ENCODE measurements at regions of chr2 and their contacts with region 1.

Region 1: GRCh38 chr2:105454801-105455485 is 56.1 kb upstream of the FHL2 start:
- DNase-seq: peak; percentile 94
- ATAC-seq: peak; percentile 70
- H3K4me3 ChIP-seq: peak overlapping the region; percentile 28; the same call in 1 of the 2 replicates
- H3K27ac ChIP-seq: peak overlapping the region; percentile 96
- H3K4me1 ChIP-seq: peaks cover 28% of the 10 kb centered on the region
- H3K27me3 ChIP-seq: no peaks in the 10 kb centered on the region
- CTCF ChIP-seq: peak; percentile 65

Region 2: DNA sequence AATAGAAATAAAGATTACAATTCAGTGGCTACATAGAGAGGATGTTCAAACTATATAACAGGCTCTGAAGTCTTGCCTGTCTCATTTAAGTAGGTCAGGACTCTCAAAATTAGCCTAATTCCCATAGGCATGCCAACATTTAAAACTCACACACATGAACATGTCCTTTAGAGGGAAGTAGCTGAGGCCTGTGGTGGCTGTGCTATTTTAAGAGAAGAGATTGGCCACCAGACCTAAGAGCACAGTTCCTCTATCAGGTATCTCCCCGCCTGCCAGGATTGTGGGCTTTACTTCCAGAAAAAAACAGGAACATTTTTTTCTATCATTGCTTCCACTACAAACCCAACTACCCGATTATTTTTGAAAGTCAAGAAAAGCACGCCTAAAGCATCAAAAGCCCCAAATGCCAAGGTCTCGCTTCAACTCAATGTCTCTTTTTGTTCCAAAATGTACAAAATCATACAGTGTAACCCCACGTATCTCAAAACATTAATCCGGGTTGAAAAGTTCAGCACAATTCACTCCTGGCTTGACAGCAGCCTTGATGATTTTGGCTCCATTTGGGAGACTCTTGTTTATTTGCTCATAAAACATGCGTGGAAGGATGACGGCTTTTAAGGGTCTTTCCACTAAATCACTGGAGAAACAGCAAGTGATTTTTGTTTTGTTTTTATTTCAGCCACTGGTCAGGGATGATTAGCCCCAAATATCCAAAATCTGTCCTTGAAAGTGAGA is 71.3 kb before region 1 on chr2:
- CTCF ChIA-PET with region 1: no interaction called
- POLR2A ChIA-PET with region 1: no interaction called
- intact Hi-C with region 1: no loop called
- DNase-seq: no peak
- ATAC-seq: no peak
- H3K4me3 ChIP-seq: no peak overlapping the region
- H3K27ac ChIP-seq: no peak overlapping the region
- H3K4me1 ChIP-seq: peaks cover 55% of the 10 kb centered on the region
- H3K27me3 ChIP-seq: no peaks in the 10 kb centered on the region
- CTCF ChIP-seq: no peak

Region 3: GRCh38 chr2:105397964-105398698 is 56.8 kb before region 1 on chr2:
- CTCF ChIA-PET with region 1: interaction called, 5 read pairs
- POLR2A ChIA-PET with region 1: interaction called, 3 read pairs
- intact Hi-C with region 1: loop called (anchors 1 kb)
- DNase-seq: no peak
- ATAC-seq: peak; percentile 23
- H3K4me3 ChIP-seq: peak overlapping the region; percentile 97
- H3K27ac ChIP-seq: peak overlapping the region; percentile 96
- H3K4me1 ChIP-seq: peaks cover 49% of the 10 kb centered on the region
- H3K27me3 ChIP-seq: no peaks in the 10 kb centered on the region
- CTCF ChIP-seq: no peak

Region 4: DNA sequence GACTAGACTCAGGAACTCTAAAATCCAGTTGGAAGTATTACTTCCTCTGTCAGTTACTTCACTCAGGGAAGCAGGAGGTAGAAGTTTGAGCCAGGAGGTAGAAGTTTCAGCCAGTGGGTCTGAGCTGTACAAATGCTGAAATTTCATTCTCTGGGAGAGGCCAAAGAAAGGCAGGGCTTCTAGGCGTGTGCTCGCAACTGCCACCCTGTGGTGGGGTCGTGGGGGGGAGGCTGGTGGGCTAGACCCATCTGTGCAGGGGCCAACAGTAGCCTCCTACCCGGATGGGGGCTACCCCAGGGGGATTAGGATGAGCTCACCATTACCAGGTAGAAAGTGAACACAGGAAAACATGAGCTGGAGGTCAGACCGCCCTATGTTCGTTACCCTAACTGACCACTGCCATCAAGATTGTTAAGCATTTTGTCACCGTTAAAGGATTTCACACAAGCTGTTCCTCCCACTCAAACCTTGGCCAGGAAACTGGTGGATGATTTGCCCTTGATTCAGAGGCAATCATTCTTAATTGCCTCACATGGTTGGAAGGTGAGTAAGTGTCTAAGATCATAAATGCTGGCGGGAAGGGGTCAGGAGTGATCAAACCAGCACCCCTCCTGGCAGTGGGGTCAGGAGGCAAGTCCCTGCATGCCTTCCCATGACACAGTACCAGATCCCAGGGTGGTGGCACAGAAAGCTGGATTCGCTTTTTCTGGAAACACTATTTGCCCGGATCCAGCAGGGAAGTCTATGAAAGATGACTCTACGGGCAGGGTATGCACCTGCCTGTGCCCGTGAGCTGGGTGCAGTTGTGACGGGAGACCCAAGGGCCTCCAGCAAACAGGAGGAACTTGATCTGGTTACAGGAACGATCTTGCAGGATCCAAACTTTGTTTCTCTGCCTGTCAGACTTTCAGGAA is 50.9 kb before region 1 on chr2:
- CTCF ChIA-PET with region 1: interaction called, 5 read pairs
- POLR2A ChIA-PET with region 1: interaction called, 6 read pairs
- intact Hi-C with region 1: loop called (anchors 1 kb)
- DNase-seq: peak; percentile 95
- ATAC-seq: peak; percentile 80
- H3K4me3 ChIP-seq: peak overlapping the region; percentile 46
- H3K27ac ChIP-seq: peak overlapping the region; percentile 97
- H3K4me1 ChIP-seq: peaks cover 53% of the 10 kb centered on the region
- H3K27me3 ChIP-seq: no peaks in the 10 kb centered on the region
- CTCF ChIP-seq: peak; percentile 71

Region 5: GRCh38 chr2:105417857-105418436 is 37.0 kb before region 1 on chr2:
- CTCF ChIA-PET with region 1: no interaction called
- POLR2A ChIA-PET with region 1: interaction called, 3 read pairs
- intact Hi-C with region 1: loop called (anchors 1 kb)
- DNase-seq: peak; percentile 71
- ATAC-seq: peak; percentile 96
- H3K4me3 ChIP-seq: no peak overlapping the region
- H3K27ac ChIP-seq: no peak overlapping the region; the same call in 1 of the 2 replicates
- H3K4me1 ChIP-seq: peaks cover 12% of the 10 kb centered on the region
- H3K27me3 ChIP-seq: no peaks in the 10 kb centered on the region
- CTCF ChIP-seq: no peak

Region 6: DNA sequence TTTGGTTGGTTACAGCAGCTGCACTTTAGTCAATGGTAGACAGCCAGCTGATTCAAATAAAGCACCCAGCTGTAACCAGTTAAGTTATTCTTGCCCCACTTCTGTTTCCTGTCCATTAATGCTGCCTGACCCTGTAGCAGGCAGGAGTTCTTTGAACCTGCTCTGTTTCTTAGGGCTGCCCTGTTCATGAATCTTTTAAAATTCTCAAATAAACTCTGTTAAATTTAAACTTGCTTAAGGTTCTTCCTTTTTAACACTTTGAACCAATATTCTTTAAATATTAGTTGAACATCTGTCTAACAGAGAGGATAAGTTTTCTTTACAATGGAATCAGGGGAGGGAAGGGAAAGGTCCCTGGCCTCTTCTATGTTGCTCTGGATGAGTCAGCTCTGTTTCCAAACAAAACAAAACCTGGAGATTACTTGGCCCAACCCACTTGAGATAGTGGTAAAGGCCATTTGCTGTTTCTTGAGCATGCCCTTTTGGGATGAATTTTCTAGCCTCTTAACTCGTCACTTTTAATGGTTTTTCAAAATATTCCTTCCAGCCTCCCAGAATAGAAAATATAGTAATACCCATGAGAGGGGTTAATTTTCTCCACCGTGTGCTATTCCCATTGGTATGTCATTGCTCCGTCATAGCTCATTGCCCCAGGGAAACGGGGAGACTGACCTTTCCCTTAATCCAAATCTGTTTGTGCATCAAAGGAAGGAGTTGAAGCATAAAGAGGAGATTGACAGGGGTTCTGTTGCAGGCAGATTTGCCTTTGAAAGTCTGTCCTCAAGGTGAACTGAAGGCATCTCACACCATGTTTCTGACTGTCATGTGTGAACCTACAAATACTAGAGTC is 56.0 kb after region 1 on chr2:
- CTCF ChIA-PET with region 1: no interaction called
- POLR2A ChIA-PET with region 1: no interaction called
- intact Hi-C with region 1: loop called (anchors 2 kb)
- DNase-seq: peak; percentile 72
- ATAC-seq: peak; percentile 94
- H3K4me3 ChIP-seq: no peak overlapping the region
- H3K27ac ChIP-seq: peak overlapping the region; percentile 25
- H3K4me1 ChIP-seq: peaks cover 11% of the 10 kb centered on the region
- H3K27me3 ChIP-seq: no peaks in the 10 kb centered on the region
- CTCF ChIP-seq: no peak

Region 7: GRCh38 chr2:105521205-105521604 is 66.3 kb after region 1 on chr2:
- CTCF ChIA-PET with region 1: interaction called, 5 read pairs
- POLR2A ChIA-PET with region 1: no interaction called
- intact Hi-C with region 1: loop called (anchors 1 kb)
- DNase-seq: peak; percentile 67
- ATAC-seq: no peak
- H3K4me3 ChIP-seq: no peak overlapping the region
- H3K27ac ChIP-seq: no peak overlapping the region
- H3K4me1 ChIP-seq: no peaks in the 10 kb centered on the region
- H3K27me3 ChIP-seq: no peaks in the 10 kb centered on the region
- CTCF ChIP-seq: peak; percentile 88

Measured in PC-3 (cell line).